Activated T-helper 2 cell treated with anti-CD3 and anti-CD28 coated beads, Interferon-gamma antibody, Interleukin-2, Interleukin-4, amounts not matched to agents 10 μg/mL and 5 μg/mL and 100 μg/mL, durations not matched to agents 14 hours and 24 hours and 36 hours (primary cell): ENCODE measurements at regions of chr12 and their contacts with region 1.

Region 1: DNA sequence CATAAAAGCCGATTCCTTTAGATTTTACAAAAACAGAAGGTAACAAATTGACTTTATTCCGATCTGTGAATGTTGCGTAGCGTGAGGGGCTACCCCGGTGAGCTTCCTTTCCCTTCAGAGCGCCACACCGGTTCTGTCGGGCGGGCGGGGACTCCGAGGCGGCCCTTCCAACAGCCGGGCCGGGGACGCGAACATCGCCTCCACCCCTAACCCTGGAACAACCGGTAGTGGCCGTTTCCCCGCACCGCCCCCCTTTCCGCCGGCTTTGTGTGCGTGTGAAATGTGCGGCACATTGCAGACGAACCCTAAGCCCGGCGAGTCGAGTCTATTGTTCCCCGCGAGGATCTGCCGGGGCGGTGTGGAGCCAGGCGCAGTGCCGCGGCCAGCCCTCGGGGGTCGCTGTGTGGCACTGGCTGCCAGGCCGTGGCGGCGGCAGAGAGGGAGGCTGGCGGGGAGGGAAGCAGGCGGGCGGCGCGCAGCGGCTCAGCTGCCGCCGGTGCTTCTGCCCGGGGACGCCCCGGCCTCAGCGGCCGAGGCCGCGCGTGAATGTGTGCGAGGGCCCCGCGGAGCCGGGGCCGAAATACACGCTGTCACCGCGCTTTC is 775 bp upstream of the ARID2 start:
- DNase-seq: peak; percentile 96
- H3K4me3 Mint-ChIP-seq: peak overlapping the region; percentile 100
- H3K27ac Mint-ChIP-seq: peak overlapping the region; percentile 100
- H3K4me1 Mint-ChIP-seq: peaks cover 31% of the 10 kb centered on the region
- H3K27me3 Mint-ChIP-seq: no peaks in the 10 kb centered on the region

Region 2: DNA sequence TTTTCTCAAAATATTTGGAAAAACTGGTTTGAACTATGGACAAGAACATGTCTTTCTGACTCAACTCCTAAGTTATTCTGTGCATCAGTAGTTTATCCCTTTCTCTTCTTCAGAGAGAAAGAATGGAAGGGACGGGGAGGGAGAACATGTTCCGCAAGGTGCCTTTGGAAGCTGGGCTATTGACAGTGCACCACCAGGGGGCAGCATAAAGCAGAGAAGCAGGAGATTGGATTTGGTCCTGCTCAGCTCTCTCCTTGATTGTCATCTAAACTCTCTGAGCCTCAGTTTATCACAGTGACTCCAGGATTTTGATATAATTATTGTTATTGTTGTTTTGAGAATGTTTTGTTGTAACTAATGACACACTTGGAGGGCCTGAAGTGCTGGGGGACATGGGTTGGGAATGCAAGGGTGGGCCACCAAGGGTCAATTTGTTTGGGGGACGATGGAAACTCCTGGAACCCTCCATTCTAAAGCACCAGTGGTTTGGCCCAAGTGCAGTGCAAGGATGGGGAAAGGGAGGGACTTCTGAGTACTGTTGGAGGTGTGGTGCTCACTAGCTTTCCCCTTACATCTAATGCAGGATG is 558.2 kb before region 1 on chr12:
- intact Hi-C with region 1: loop called (anchors 5 kb)
- DNase-seq: peak; percentile 55
- H3K4me3 Mint-ChIP-seq: no peak overlapping the region
- H3K27ac Mint-ChIP-seq: no peak overlapping the region
- H3K4me1 Mint-ChIP-seq: no peaks in the 10 kb centered on the region
- H3K27me3 Mint-ChIP-seq: peaks cover 9% of the 10 kb centered on the region

Region 3: DNA sequence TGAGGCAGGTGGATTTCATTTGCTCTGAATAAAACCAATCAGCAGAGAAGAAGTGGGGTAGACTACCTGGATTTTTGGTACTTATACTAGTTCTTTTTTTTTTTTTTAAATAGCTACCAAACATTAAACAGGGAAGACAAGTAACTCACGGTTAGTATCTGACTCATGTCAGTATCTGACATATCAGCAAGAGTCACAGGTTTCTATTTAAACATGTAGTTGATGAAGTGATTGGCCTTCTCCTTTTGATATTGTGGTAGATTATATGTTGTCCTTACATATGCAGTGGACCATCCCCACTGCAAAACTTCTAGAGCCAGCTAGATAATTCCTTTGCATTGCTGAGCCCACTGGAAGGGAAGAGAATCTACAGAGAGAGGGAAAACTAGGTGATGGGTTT is 304.8 kb before region 1 on chr12:
- intact Hi-C with region 1: loop called (anchors 5 kb)
- DNase-seq: no peak
- H3K4me3 Mint-ChIP-seq: no peak overlapping the region
- H3K27ac Mint-ChIP-seq: no peak overlapping the region
- H3K4me1 Mint-ChIP-seq: peaks cover 17% of the 10 kb centered on the region
- H3K27me3 Mint-ChIP-seq: no peaks in the 10 kb centered on the region

Region 4: GRCh38 chr12:45670346-45671065 is 58.2 kb before region 1 on chr12:
- intact Hi-C with region 1: loop called (anchors 1 kb)
- DNase-seq: peak; percentile 11
- H3K4me3 Mint-ChIP-seq: no peak overlapping the region
- H3K27ac Mint-ChIP-seq: no peak overlapping the region
- H3K4me1 Mint-ChIP-seq: peaks cover 31% of the 10 kb centered on the region
- H3K27me3 Mint-ChIP-seq: peaks cover 20% of the 10 kb centered on the region

Region 5: DNA sequence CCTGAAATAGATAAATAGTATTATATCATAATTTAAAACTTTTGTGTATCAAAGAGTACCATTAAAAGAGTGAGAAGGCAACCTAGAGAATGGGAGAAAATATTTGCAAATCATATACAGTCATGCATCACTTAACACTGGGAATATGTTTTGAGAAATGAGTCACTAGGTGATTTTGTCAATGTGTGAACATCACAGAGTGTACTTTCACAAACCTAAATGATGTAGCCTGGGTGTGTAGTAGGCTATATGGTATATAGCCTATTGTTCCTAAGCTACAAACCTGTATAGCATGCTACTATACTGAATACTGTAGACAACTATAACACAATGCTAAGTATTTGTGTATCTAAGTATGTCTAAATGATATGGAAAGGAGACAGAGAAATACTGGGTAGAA is 47.3 kb before region 1 on chr12:
- intact Hi-C with region 1: no loop called
- DNase-seq: no peak
- H3K4me3 Mint-ChIP-seq: no peak overlapping the region
- H3K27ac Mint-ChIP-seq: no peak overlapping the region
- H3K4me1 Mint-ChIP-seq: peaks cover 16% of the 10 kb centered on the region
- H3K27me3 Mint-ChIP-seq: peaks cover 57% of the 10 kb centered on the region

Region 6: DNA sequence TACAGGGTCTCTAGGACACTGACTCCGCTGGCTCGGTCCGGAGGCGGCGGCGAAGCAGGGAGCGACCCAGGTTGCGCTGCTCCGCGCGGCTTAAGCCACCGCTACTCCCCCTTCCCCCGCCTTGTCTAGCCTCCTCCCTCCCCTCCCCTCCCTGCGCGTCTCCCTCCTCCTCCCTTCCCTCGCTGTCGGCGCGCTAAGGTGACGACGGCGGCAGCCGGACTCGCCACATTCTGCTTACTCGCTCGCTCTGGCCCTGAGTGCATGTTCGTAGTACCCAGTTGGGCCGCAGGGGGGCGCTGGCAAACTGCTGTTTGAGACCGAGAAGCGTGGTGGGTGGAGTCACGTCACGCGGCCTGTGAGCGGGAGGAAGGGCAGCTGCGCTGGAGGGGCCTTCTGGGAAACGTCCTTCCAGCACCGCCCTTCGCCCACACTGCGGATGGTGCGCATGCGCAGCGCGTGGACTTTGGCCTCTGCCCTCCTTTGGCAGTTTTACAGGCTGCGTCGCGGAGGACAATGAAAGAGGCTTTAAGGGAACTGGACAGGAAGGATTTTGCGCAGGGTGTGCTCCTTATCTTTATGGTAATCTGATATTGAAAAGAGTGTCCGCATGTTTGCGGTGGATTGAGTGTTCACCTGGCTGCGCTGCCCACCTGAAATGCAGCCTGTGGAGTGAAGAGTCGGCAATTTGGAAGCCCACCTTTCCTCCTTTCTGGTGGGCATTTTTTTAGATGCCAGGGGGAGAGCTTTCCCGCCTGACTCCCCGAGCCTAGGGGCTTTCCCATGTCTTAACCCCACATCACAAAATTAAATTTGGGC is 261.9 kb after region 1 on chr12 and contains the start of gene SCAF11:
- intact Hi-C with region 1: loop called (anchors 1 kb)
- DNase-seq: peak; percentile 100
- H3K4me3 Mint-ChIP-seq: peak within 1 kb of the TSS; percentile 93
- H3K27ac Mint-ChIP-seq: peak within 1 kb of the TSS; percentile 98
- H3K4me1 Mint-ChIP-seq: peaks cover 38% of the 10 kb centered on the region
- H3K27me3 Mint-ChIP-seq: peaks cover 6% of the 10 kb centered on the region
- total RNA-seq, gene SCAF11: 125 and 128 TPM in 2 replicates